ENCODE measurements at regions of chr11 and their contacts with region 1.

Region 1: DNA sequence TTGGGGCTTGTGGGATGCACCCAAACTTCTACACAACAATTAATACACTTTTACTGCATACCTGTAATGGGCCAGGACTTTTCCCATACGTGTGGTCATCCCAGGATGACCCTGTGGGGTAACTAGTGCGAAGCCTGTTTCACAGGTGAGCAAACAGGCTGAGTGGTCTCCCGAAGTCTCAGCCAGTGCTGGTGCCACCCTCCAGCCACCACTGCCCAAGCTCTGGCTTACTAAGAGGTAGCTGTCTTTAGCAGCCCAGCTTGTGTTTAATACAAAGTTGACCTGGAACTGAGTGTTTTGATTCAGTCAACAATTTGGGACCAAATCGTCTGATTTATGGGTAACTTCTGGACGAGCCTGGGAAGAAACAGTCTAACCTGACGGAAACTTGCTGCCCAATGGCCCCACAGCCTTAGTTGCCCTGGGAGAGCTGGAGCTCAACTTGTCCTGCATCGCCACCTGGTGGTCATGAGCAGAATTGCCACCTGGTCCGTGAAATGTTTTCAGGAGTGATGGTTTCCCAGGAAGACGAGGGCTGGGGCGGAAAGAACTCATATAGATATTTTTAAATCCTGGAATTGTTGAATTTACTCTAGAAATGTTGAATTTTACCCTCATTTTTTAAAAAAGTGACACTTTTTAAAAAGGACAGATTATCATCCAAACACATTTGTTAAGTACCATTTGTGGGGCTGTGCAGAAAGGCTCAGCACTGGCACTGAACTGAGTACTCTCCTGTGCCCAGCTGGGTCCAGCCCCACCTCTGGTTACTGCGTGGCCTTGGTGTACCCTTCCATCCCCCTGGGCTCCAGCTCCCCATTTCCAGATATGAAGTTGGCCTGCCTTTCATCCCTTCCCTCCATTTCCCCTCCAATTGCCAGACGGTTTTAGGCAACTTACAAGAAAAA is 95.5 kb upstream of the PARVA start:
- DNase-seq: peak; percentile 86 to 87
- H3K4me3 ChIP-seq: no peak overlapping the region
- H3K27ac ChIP-seq: no peak overlapping the region
- H3K4me1 ChIP-seq: peaks cover 0 to 5% of the 10 kb centered on the region in 2 donors
- H3K27me3 ChIP-seq: no peaks in the 10 kb centered on the region
- CTCF ChIP-seq: peak; percentile 95 to 99 (median 98)
- POLR2A ChIP-seq: no peak

Region 2: GRCh38 chr11:11806586-11806985 is 475.2 kb before region 1 on chr11:
- intact Hi-C with region 1: loop called (anchors 10 kb)
- DNase-seq: no peak
- H3K4me3 ChIP-seq: no peak overlapping the region
- H3K27ac ChIP-seq: no peak overlapping the region
- H3K4me1 ChIP-seq: no peaks in the 10 kb centered on the region
- H3K27me3 ChIP-seq: no peaks in the 10 kb centered on the region
- CTCF ChIP-seq: no peak
- POLR2A ChIP-seq: no peak

Measured in uterus (tissue), 4 donors.